T-cell (primary cell): ENCODE measurements at regions of chr5 and their contacts with region 1.

Region 1: DNA sequence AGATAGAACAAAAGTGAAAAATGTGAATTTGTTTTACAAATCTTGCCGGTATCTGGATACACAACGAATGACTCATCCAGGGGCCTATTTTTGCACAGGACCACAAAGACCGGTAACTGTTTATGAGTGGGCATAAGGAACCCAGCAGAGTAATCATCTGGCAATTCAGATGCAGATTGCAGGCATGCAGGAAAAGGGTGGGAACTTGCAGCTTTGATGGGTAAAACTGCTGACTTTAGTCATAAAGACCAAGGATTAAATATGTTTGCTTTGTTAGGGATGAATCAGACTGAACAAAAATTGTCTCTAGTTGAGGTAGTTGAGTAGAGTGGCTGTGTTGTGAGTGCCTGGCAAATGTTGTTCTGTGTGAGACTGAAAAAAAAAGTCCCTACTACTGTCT is 309.6 kb upstream of the CCNH start:
- DNase-seq: no peak
- ATAC-seq: no peak
- H3K4me3 ChIP-seq: no peak overlapping the region
- H3K4me3 Mint-ChIP-seq: no peak overlapping the region
- H3K27ac ChIP-seq: no peak overlapping the region
- H3K27ac Mint-ChIP-seq: no peak overlapping the region
- H3K4me1 ChIP-seq: no peaks in the 10 kb centered on the region
- H3K4me1 Mint-ChIP-seq: no peaks in the 10 kb centered on the region
- H3K27me3 ChIP-seq: no peaks in the 10 kb centered on the region
- H3K27me3 Mint-ChIP-seq: peaks cover 0 to 3% of the 10 kb centered on the region in 2 donors

Region 2: DNA sequence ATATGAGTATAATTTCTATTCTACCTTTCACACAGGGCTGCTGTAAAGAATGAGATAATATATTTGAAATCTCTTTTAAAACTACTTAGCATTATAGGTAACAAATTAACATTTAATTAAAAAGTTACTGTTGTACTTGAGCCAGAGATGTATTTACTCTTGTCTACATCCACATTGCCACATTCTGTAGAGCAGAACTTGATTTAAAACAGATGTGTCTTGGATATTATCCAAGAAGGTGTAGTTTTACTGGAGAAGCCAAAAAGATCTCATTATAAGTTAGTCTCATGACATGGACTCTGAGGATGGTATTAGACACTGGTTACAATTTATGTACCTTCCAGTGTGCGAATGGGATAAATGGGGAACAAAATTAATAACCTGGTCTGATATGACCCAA is 16.4 kb before region 1 on chr5:
- CTCF ChIA-PET with region 1: interaction called in 1 of 2 experiments, 10 read pairs
- POLR2A ChIA-PET with region 1: no interaction called
- DNase-seq: no peak
- ATAC-seq: no peak
- H3K4me3 ChIP-seq: no peak overlapping the region
- H3K4me3 Mint-ChIP-seq: no peak overlapping the region
- H3K27ac ChIP-seq: no peak overlapping the region
- H3K27ac Mint-ChIP-seq: no peak overlapping the region
- H3K4me1 ChIP-seq: no peaks in the 10 kb centered on the region
- H3K4me1 Mint-ChIP-seq: no peaks in the 10 kb centered on the region
- H3K27me3 ChIP-seq: no peaks in the 10 kb centered on the region
- H3K27me3 Mint-ChIP-seq: peaks cover 0 to 2% of the 10 kb centered on the region in 2 donors